Activated CD8-positive, alpha-beta memory T cell treated with anti-CD3 and anti-CD28 coated beads, Interleukin-2, amount 10 ng/mL, durations not matched to agents 7 days and 5 days (primary cell): ENCODE measurements at regions of chr12 and their contacts with region 1.

Region 1: DNA sequence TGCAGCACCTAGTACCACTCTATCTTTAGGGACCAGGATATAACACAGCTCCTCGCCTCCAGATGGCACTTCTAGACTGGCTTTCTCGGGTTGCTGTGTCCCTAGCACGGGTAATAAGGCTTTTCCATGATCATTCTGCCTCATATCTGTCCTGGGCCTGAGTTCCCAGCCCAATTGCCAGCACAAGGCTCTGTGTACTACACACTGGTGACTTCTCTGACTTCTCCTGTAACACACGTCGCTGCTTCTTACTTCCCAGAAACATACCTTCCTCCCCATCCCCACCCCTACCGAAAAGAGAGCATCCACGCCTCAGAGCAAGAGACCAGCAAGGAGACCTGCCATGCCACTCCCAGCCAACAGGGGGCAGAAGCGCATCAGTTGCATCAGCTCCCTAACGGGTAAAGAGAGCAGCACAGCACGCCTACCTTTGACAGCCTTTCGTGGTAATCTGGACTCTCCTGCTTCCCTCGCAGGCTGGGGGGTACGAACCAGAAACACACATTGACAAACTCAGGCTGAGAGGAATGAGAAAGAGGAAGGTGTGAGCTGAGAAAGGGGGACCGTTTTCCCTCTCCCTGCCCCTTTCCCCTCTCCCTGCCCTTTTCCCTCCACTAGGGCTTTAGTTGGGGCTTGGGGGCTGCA is 21.2 kb upstream of the ZNF740 start:
- DNase-seq: peak; percentile 96
- ATAC-seq: peak; percentile 99
- H3K4me3 Mint-ChIP-seq: peak overlapping the region; percentile 4
- H3K27ac Mint-ChIP-seq: peak overlapping the region; percentile 72
- H3K4me1 Mint-ChIP-seq: peaks cover 17% of the 10 kb centered on the region
- H3K27me3 Mint-ChIP-seq: no peaks in the 10 kb centered on the region

Region 2: GRCh38 chr12:52870351-52871290 is 288.7 kb before region 1 on chr12:
- CTCF ChIA-PET with region 1: no interaction called
- DNase-seq: peak; percentile 83
- ATAC-seq: peak; percentile 53
- H3K4me3 Mint-ChIP-seq: no peak overlapping the region
- H3K27ac Mint-ChIP-seq: no peak overlapping the region
- H3K4me1 Mint-ChIP-seq: peaks cover 13% of the 10 kb centered on the region
- H3K27me3 Mint-ChIP-seq: peaks cover 6% of the 10 kb centered on the region

Region 3: GRCh38 chr12:53065975-53066931 is 93.1 kb before region 1 on chr12:
- CTCF ChIA-PET with region 1: interaction called, 28 read pairs
- DNase-seq: peak; percentile 72
- ATAC-seq: peak; percentile 80
- H3K4me3 Mint-ChIP-seq: no peak overlapping the region
- H3K27ac Mint-ChIP-seq: no peak overlapping the region
- H3K4me1 Mint-ChIP-seq: peaks cover 5% of the 10 kb centered on the region
- H3K27me3 Mint-ChIP-seq: no peaks in the 10 kb centered on the region

Region 4: GRCh38 chr12:53129170-53129569 is 30.1 kb before region 1 on chr12:
- CTCF ChIA-PET with region 1: no interaction called
- DNase-seq: no peak
- ATAC-seq: no peak
- H3K4me3 Mint-ChIP-seq: no peak overlapping the region
- H3K27ac Mint-ChIP-seq: no peak overlapping the region
- H3K4me1 Mint-ChIP-seq: no peaks in the 10 kb centered on the region
- H3K27me3 Mint-ChIP-seq: no peaks in the 10 kb centered on the region

Region 5: DNA sequence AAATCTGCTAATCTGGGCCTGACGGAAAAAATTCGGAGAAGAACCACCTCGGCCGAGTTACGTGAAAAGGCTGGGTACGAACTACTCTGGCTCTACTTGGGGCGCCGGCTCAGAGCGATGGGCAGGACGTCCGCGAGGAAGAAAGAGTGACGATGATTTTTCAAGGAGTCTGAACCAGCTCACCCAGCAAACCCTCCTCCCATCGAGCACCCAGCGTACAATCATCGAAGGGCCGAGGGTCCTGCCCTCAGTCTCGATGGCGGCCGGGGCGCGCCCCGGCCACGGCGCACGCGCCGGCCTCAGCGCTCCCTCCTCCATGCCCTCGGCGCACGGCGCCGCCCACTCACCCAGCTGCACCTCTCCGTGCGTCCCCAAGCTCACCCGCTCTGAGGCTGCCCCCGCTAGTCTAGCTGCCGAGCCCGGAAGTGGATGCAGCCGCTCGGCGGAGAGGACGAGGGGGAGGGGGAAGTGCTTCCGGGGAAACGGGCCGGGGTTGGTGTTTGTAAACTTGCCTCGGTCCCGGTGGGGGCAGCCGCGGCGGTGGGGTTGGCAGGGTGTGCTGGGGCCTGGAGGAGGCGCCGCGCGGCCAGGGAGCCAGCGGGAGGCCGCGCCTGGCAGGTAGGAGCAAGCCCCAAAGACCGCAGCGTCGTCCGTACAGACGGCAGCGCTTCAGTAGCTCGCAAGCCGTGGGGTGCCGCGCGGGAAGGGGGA is 21.1 kb after region 1 on chr12 and contains the starts of genes CSAD and ZNF740:
- CTCF ChIA-PET with region 1: interaction called, 63 read pairs
- DNase-seq: peak; percentile 99
- ATAC-seq: peak; percentile 98
- H3K4me3 Mint-ChIP-seq: peak within 1 kb of the TSS; percentile 85
- H3K27ac Mint-ChIP-seq: peak within 1 kb of the TSS; percentile 98
- H3K4me1 Mint-ChIP-seq: peaks cover 50% of the 10 kb centered on the region
- H3K27me3 Mint-ChIP-seq: no peaks in the 10 kb centered on the region
- total RNA-seq, gene CSAD: 19.6 to 28.1 TPM
- total RNA-seq, gene ZNF740: 35.8 to 47.0 TPM

Region 6: GRCh38 chr12:53205747-53206419 is 46.6 kb after region 1 on chr12:
- CTCF ChIA-PET with region 1: interaction called, 38 read pairs
- DNase-seq: peak; percentile 96
- ATAC-seq: peak; percentile 71
- H3K4me3 Mint-ChIP-seq: peak overlapping the region; percentile 91
- H3K27ac Mint-ChIP-seq: peak overlapping the region; percentile 89
- H3K4me1 Mint-ChIP-seq: peaks cover 75% of the 10 kb centered on the region
- H3K27me3 Mint-ChIP-seq: no peaks in the 10 kb centered on the region

Region 7: GRCh38 chr12:53267999-53268647 is 108.8 kb after region 1 on chr12 and contains the start of gene ESPL1:
- CTCF ChIA-PET with region 1: interaction called, 52 read pairs
- DNase-seq: peak; percentile 92
- ATAC-seq: peak; percentile 96
- H3K4me3 Mint-ChIP-seq: peak within 1 kb of the TSS; percentile 100
- H3K27ac Mint-ChIP-seq: peak within 1 kb of the TSS; percentile 95
- H3K4me1 Mint-ChIP-seq: peaks cover 46% of the 10 kb centered on the region
- H3K27me3 Mint-ChIP-seq: no peaks in the 10 kb centered on the region
- total RNA-seq, gene ESPL1: 99.0 to 137 TPM

Region 8: GRCh38 chr12:53321074-53321814 is 161.9 kb after region 1 on chr12 and contains the start of gene AAAS:
- CTCF ChIA-PET with region 1: interaction called, 60 read pairs
- DNase-seq: peak; percentile 99
- ATAC-seq: peak; percentile 86
- H3K4me3 Mint-ChIP-seq: peak within 1 kb of the TSS; percentile 92
- H3K27ac Mint-ChIP-seq: peak within 1 kb of the TSS; percentile 97
- H3K4me1 Mint-ChIP-seq: peaks cover 39% of the 10 kb centered on the region
- H3K27me3 Mint-ChIP-seq: no peaks in the 10 kb centered on the region
- total RNA-seq, gene AAAS: 60.9 to 61.7 TPM